Heart right ventricle (tissue), 16 donors: ENCODE measurements at regions of chr11 and their contacts with region 1.

Region 1: DNA sequence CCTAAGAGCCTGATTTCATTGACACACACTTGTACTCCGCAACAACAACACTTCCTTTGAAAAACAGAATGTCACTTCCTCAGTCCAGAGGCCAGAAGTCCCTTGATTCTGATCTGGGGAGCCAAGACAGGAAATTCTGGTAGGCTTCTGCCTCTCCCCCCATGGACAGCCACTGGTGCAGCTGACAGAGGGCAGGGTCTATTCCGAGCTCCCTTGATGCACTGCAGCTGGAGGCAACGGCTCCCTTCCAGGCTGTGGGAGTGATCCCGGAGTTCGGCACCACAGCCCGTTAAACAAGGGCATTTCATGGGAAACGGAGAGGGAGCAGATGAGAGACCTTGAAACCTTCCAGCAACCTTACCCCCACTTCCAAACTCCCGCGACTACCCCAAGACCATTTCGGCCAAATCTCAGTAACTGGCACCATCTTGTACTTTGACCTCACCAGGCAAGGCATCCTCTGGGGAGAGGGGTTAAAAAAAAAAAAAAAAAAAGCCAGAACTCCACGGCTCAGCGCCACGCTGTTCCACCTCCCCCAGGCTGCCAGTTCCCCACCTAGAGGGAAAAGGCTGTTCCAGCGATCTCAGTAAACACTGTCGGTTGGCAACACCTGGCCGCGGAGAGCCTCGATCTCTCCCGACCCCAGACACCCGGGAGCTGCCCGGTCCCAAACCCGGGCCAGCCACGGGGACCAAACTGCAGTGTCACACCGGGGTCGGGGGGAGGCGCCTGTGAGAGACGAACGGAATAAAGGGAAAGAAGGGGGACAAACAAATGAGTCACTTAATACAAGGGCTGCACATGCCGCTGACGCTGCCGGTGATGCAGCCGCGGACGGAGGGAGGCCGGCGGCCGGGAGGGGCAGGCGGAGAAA is 1.1 kb downstream of the GAB2 start:
- DNase-seq: peak; percentile 87 to 88
- ATAC-seq: peak; percentile 53 to 79 (median 76)
- H3K4me3 ChIP-seq: peak overlapping the region; percentile 76 to 96 (median 87)
- H3K27ac ChIP-seq: peak overlapping the region; percentile 92 to 99 (median 97)
- H3K4me1 ChIP-seq: peaks cover 3 to 70% (median 41%) of the 10 kb centered on the region in 9 donors
- H3K27me3 ChIP-seq: no peaks in the 10 kb centered on the region
- CTCF ChIP-seq: peak; percentile 25 to 72 (median 58)

Region 2: GRCh38 chr11:78149646-78150045 is 266.9 kb before region 1 on chr11:
- intact Hi-C with region 1: loop called in 3 of 10 experiments (anchors 5 to 10 kb)
- DNase-seq: no peak
- ATAC-seq: peak in 7 of 8 donors; percentile 65 to 93 (median 75)
- H3K4me3 ChIP-seq: no peak overlapping the region
- H3K27ac ChIP-seq: no peak overlapping the region
- H3K4me1 ChIP-seq: peaks cover 0 to 10% (median 0%) of the 10 kb centered on the region in 9 donors
- H3K27me3 ChIP-seq: no peaks in the 10 kb centered on the region
- CTCF ChIP-seq: peak in 7 of 9 donors; percentile 32 to 63 (median 54)

Region 3: DNA sequence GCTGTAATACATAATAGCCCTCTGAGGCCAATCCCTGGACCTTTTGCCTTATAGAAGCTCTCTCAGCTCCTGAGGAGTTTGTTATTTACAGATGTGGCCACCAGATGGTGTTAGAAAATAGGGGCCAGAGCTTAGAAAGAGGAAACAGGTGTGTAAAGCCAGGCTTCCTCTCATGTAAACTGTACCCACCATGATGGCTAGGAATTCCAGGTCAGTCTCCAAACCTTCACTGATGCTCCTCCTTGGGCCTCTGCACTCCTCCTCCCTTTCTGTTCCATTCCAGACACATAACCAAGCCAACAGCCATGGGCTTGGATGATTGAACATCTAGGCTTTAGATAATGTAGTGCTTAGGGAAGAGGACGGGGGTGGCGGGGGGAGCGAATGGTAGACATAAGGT is 188.1 kb before region 1 on chr11:
- intact Hi-C with region 1: loop called in 9 of 10 experiments (anchors 1 to 5 kb)
- DNase-seq: peak in 1 of 2 donors; percentile 55
- ATAC-seq: peak; percentile 53 to 80 (median 64)
- H3K4me3 ChIP-seq: no peak overlapping the region
- H3K27ac ChIP-seq: peak overlapping the region in 1 of 10 donors; percentile 10
- H3K4me1 ChIP-seq: peaks cover 0 to 46% (median 34%) of the 10 kb centered on the region in 9 donors
- H3K27me3 ChIP-seq: no peaks in the 10 kb centered on the region
- CTCF ChIP-seq: peak; percentile 31 to 81 (median 63)

Region 4: GRCh38 chr11:78318321-78319114 is 98.0 kb before region 1 on chr11:
- intact Hi-C with region 1: loop called in 6 of 10 experiments (anchors 5 to 10 kb)
- DNase-seq: no peak
- ATAC-seq: peak in 4 of 8 donors; percentile 19 to 30 (median 26)
- H3K4me3 ChIP-seq: no peak overlapping the region
- H3K27ac ChIP-seq: peak overlapping the region in 6 of 10 donors; percentile 8 to 44 (median 36)
- H3K4me1 ChIP-seq: peaks cover 19 to 55% (median 50%) of the 10 kb centered on the region in 9 donors
- H3K27me3 ChIP-seq: no peaks in the 10 kb centered on the region
- CTCF ChIP-seq: no peak

Region 5: DNA sequence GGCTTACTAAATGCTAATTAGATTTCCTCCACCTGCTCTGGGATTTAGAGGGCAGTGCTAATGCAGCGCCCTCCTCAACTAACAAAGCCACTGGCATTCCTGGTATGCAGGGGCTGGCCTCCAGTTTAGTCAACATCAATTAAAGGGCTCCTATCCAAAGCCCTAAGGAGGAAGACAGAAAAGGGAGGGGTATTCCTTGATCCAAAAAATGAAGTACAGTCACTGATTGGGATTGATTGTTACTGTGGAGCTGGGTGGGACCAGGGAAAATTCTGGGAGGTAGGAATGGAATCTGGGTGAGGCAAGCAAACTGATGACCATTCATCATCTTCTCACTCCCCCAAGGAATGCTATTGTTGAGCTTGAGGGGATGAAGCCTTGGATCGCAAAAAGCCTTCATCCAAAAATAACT is 51.2 kb before region 1 on chr11:
- intact Hi-C with region 1: loop called in 2 of 10 experiments (anchors 5 to 10 kb)
- DNase-seq: no peak
- ATAC-seq: peak; percentile 50 to 89 (median 64)
- H3K4me3 ChIP-seq: no peak overlapping the region
- H3K27ac ChIP-seq: peak overlapping the region in 5 of 10 donors; percentile 7 to 71 (median 43)
- H3K4me1 ChIP-seq: peaks cover 0 to 56% (median 27%) of the 10 kb centered on the region in 9 donors
- H3K27me3 ChIP-seq: no peaks in the 10 kb centered on the region
- CTCF ChIP-seq: no peak

Region 6: GRCh38 chr11:78549624-78550409 is 133.3 kb after region 1 on chr11:
- intact Hi-C with region 1: loop called in 2 of 10 experiments (anchors 10 kb)
- DNase-seq: no peak
- ATAC-seq: no peak
- H3K4me3 ChIP-seq: no peak overlapping the region
- H3K27ac ChIP-seq: peak overlapping the region in 1 of 10 donors; percentile 20
- H3K4me1 ChIP-seq: peaks cover 0 to 19% (median 5%) of the 10 kb centered on the region in 9 donors
- H3K27me3 ChIP-seq: no peaks in the 10 kb centered on the region
- CTCF ChIP-seq: no peak

Region 7: GRCh38 chr11:79119491-79120284 is 703.1 kb after region 1 on chr11:
- intact Hi-C with region 1: no loop called
- DNase-seq: no peak
- ATAC-seq: peak in 1 of 8 donors; percentile 48
- H3K4me3 ChIP-seq: no peak overlapping the region
- H3K27ac ChIP-seq: no peak overlapping the region
- H3K4me1 ChIP-seq: peaks cover 0 to 11% (median 0%) of the 10 kb centered on the region in 9 donors
- H3K27me3 ChIP-seq: no peaks in the 10 kb centered on the region
- CTCF ChIP-seq: no peak